Colonic mucosa (tissue), 4 donors: ENCODE measurements at regions of chr10 and their contacts with region 1.

Region 1: DNA sequence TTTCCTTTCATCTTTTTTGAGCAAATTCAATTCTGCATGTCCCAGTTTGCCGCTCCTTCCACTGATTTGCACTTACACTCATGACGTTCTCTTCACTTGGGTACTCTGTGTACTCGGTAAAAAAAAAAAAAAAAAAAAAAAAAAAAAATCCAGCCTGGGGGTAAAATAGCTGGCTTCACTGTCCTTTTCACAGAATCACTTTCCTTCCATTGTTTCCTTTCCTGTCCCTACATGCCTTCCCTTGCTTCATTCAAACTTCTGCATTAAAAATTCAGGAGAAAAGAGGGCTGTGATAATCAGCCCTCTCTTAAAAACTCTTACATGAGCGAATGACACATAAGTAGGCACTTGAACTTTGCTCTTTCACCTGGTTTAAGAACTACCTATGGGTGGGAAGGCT is 8.7 kb downstream of the ANKRD1 start:
- DNase-seq: no peak
- H3K4me3 ChIP-seq: no peak overlapping the region
- H3K27ac ChIP-seq: no peak overlapping the region
- H3K4me1 ChIP-seq: no peaks in the 10 kb centered on the region
- H3K27me3 ChIP-seq: no peaks in the 10 kb centered on the region
- CTCF ChIP-seq: no peak

Region 2: GRCh38 chr10:89992575-89992974 is 919.6 kb before region 1 on chr10:
- intact Hi-C with region 1: no loop called
- DNase-seq: no peak
- H3K4me3 ChIP-seq: no peak overlapping the region
- H3K27ac ChIP-seq: no peak overlapping the region
- H3K4me1 ChIP-seq: no peaks in the 10 kb centered on the region
- H3K27me3 ChIP-seq: no peaks in the 10 kb centered on the region
- CTCF ChIP-seq: no peak

Region 3: DNA sequence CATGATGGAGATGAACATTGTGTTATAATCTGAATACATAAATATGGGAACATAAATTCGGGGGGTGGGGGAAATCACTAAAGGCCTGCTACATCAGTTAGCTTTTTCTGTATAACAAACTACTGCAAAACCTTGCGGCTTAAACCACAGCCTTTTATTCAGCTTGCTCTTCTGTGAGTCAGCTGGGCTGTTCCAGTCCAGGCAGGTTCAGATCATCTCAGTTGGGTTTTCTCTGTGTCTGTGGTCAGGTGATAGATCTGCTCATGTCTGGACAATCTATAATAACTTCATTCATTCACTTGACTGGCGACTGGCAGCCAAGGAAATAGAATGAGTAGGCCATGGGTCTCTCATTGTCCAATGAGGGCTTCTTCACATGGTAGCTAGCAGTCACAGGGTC is 77.8 kb before region 1 on chr10:
- intact Hi-C with region 1: no loop called
- DNase-seq: no peak
- H3K4me3 ChIP-seq: no peak overlapping the region
- H3K27ac ChIP-seq: no peak overlapping the region
- H3K4me1 ChIP-seq: no peaks in the 10 kb centered on the region
- H3K27me3 ChIP-seq: no peaks in the 10 kb centered on the region
- CTCF ChIP-seq: no peak

Region 4: DNA sequence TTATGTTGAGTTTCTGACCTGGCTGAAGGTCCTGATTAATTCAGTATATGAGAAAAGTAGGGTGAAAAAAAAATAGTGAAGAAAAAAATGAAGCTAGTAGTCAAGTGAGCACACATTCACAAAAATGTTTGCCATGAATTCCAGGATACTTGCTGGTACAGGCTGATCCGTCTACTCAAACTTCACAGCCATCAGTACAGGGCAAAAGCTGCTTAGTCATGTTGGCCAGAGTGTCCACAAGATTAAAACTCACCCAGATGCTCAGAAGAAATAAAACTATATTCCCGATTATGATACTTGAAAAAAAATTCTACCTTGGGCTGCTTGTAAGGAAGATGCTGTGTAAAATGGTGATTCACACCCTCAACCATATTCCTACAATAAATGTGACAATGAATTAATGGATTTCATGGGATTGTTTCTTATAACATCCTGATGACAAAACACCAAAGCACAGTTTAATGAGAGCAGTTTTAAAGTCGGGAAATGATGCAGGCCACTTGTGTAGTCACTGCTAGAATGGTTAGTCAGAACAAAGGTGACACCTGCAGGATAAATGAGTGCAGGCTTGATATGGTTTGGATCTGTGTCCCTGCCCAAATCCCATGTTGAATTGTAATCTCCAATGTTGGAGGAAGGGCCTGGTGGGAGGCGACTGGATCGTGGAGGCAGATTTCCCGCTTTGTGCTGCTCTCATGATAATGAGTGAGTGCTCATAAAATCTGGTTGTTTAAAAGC is 57.9 kb after region 1 on chr10:
- intact Hi-C with region 1: no loop called
- DNase-seq: no peak
- H3K4me3 ChIP-seq: no peak overlapping the region
- H3K27ac ChIP-seq: no peak overlapping the region
- H3K4me1 ChIP-seq: no peaks in the 10 kb centered on the region
- H3K27me3 ChIP-seq: no peaks in the 10 kb centered on the region
- CTCF ChIP-seq: no peak

Region 5: GRCh38 chr10:91006001-91006751 is 94.0 kb after region 1 on chr10:
- intact Hi-C with region 1: loop called (anchors 5 kb)
- DNase-seq: peak; percentile 68
- H3K4me3 ChIP-seq: no peak overlapping the region
- H3K27ac ChIP-seq: no peak overlapping the region
- H3K4me1 ChIP-seq: no peaks in the 10 kb centered on the region
- H3K27me3 ChIP-seq: no peaks in the 10 kb centered on the region
- CTCF ChIP-seq: peak; percentile 93

Region 6: DNA sequence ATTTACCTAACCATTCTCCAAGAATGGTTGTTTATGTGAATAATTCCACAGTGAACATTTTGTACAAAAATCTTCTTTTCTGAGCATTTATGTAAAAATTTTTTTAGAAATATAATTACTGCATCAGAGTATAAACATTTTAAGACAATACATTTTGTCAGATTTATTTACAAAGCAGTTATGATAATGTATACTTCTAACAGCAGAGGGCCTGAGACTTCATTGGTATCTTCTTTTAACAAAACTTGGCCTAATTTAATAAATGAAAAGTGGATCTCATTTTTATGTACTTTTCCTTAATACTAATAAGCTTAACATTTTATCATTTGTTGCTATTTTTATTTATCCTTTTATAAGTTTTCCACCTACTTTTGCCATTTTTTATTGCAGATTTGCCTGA is 567.4 kb after region 1 on chr10:
- intact Hi-C with region 1: no loop called
- DNase-seq: no peak
- H3K4me3 ChIP-seq: no peak overlapping the region
- H3K27ac ChIP-seq: no peak overlapping the region
- H3K4me1 ChIP-seq: no peaks in the 10 kb centered on the region
- H3K27me3 ChIP-seq: no peaks in the 10 kb centered on the region
- CTCF ChIP-seq: no peak